GM12878 (cell line): ENCODE measurements at regions of chr14 and their contacts with region 1.

Region 1: GRCh38 chr14:93975791-93976476 is 436 bp downstream of the ASB2 start:
- DNase-seq: peak; percentile 92
- ATAC-seq: peak; percentile 73
- H3K4me3 ChIP-seq: peak overlapping the region; percentile 67; the same call in 1 of the 2 replicates
- H3K27ac ChIP-seq: peak overlapping the region; percentile 96
- H3K4me1 ChIP-seq: peaks cover 89% of the 10 kb centered on the region
- H3K27me3 ChIP-seq: no peaks in the 10 kb centered on the region
- CTCF ChIP-seq: peak; percentile 10 to 43 (median 20); a peak in 3 of 6 replicates
- EP300 ChIP-seq: peak; percentile 52 to 59; a peak in 3 of 4 replicates
- POLR2A ChIP-seq: 0 out of 2 replicates have a peak, but pooled peaks have one; percentile 18
- RAD21 ChIP-seq: peak; percentile 15; the same call in 1 of the 2 replicates

Region 2: DNA sequence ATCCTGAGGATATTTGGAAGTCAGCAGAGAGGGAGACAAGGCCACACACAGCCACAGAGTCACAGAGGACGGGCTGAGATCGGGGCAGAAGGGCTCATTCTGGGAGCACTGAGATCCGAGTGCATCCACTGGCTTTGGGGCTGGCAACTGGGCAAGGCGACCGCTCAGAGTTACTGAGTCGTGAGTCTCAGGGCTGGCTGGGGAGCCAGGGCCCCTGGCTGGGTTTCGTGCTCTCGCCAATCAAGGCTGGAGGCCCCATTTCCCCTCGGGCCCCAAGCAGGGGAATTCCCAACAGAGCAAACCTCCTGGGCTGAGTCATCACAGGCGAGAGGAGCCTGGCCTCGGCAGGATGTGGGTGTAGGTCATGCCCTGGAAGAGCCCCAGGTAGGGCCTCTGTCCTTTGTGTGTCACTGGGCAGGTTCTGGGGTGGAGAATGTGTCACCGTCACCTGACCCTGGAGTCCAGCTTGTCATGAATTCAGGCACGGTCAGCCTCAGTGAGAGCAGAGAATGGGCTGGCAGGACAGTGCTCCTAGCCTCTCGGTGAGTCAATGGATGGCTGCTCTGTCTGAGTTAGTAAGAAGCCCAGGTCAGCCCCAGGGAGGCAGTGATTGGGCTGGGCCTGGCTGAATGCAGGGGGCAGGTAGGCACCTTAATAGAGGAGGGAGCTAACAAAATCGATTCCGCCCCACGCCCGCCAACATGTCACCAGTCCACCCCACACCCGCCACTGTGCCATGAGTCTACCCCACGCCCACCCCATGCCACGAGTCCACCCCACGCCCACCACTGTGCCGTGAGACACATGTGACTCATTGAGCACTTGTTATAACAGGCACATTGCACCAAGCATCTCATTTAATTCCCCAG is 16.5 kb before region 1 on chr14:
- CTCF ChIA-PET with region 1: interaction called, 73 read pairs
- POLR2A ChIA-PET with region 1: interaction called, 128 read pairs
- RAD21 ChIA-PET with region 1: interaction called, 324 read pairs
- SMC1A ChIA-PET with region 1: interaction called, 409 read pairs
- in situ Hi-C with region 1: no loop called
- intact Hi-C with region 1: loop called (anchors 1 kb)
- DNase-seq: peak; percentile 90
- ATAC-seq: peak; percentile 82
- H3K4me3 ChIP-seq: peak overlapping the region; percentile 11; the same call in 1 of the 2 replicates
- H3K27ac ChIP-seq: peak overlapping the region; percentile 90
- H3K4me1 ChIP-seq: peaks cover 95% of the 10 kb centered on the region
- H3K27me3 ChIP-seq: no peaks in the 10 kb centered on the region
- CTCF ChIP-seq: no peak
- EP300 ChIP-seq: peak; percentile 98 to 99
- POLR2A ChIP-seq: peak; percentile 91
- RAD21 ChIP-seq: no peak

Region 3: DNA sequence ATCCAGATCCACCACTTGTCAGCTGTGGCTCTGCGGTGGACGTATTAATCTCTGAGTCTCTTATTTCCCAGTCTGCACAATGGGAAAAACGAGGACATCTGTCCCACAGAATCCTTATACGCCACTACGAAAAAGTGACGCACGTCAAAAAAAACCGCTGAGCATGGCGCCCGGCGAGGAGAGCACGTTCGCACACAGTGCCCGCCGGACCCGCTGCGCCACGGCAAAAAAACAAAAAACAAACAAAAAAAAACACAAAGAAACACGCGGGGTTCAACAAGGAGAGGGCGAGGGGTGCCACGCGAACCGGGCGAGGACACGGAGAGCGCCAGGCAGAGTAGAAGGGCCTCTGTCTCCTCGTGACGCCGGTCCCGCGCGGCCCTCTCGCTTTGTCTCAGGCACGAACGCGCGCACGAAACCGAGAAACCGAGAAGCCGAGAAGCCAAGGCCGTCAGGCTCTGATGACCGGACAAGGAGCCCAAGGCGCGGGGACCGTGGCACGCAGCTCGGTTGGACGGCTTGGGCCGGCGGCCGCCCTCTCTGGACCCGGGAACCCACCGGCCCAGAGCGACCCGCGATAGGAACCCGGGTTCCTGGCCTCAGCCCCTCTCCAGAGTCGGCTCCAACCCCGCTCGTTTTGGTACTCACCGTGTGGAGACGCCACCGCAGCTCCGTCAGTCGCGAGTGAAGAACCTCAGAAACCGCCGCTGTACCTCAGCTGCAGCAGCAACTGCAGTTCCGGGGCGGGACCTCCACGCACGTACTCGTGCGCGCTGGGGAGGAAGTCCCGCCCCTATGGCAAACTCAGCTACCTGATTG is 104.7 kb after region 1 on chr14 and contains the start of gene DDX24:
- CTCF ChIA-PET with region 1: no interaction called
- POLR2A ChIA-PET with region 1: no interaction called
- RAD21 ChIA-PET with region 1: interaction called, 3 read pairs
- SMC1A ChIA-PET with region 1: interaction called, 3 read pairs
- in situ Hi-C with region 1: no loop called
- intact Hi-C with region 1: loop called (anchors 5 kb)
- DNase-seq: peak; percentile 85
- ATAC-seq: peak; percentile 96
- H3K4me3 ChIP-seq: peak within 1 kb of the TSS; percentile 72
- H3K27ac ChIP-seq: peak within 1 kb of the TSS; percentile 96
- H3K4me1 ChIP-seq: peaks cover 3% of the 10 kb centered on the region
- H3K27me3 ChIP-seq: no peaks in the 10 kb centered on the region
- CTCF ChIP-seq: no peak
- EP300 ChIP-seq: no peak
- POLR2A ChIP-seq: peak; percentile 98
- RAD21 ChIP-seq: no peak
- polyA plus RNA-seq, gene DDX24: 137 to 176 TPM